Calu3 (cell line): ENCODE measurements at regions of chr1 and their contacts with region 1.

Region 1: DNA sequence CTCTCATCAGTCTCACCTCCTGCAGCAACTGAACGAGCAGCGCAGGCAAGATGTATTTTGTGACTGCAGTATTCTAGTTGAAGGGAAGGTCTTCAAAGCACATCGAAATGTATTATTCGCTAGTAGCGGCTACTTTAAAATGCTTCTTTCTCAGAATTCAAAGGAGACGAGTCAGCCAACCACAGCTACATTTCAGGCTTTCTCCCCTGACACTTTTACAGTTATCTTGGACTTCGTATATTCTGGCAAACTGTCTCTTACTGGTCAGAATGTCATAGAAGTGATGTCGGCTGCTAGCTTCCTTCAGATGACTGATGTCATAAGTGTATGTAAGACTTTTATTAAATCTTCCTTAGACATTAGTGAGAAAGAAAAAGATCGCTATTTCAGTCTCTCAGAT is 53.7 kb downstream of the ZBTB8A start:
- DNase-seq: no peak
- H3K4me3 Mint-ChIP-seq: no peak overlapping the region
- H3K27ac Mint-ChIP-seq: no peak overlapping the region
- H3K4me1 Mint-ChIP-seq: no peaks in the 10 kb centered on the region
- H3K27me3 Mint-ChIP-seq: no peaks in the 10 kb centered on the region
- CTCF ChIP-seq: no peak

Region 2: DNA sequence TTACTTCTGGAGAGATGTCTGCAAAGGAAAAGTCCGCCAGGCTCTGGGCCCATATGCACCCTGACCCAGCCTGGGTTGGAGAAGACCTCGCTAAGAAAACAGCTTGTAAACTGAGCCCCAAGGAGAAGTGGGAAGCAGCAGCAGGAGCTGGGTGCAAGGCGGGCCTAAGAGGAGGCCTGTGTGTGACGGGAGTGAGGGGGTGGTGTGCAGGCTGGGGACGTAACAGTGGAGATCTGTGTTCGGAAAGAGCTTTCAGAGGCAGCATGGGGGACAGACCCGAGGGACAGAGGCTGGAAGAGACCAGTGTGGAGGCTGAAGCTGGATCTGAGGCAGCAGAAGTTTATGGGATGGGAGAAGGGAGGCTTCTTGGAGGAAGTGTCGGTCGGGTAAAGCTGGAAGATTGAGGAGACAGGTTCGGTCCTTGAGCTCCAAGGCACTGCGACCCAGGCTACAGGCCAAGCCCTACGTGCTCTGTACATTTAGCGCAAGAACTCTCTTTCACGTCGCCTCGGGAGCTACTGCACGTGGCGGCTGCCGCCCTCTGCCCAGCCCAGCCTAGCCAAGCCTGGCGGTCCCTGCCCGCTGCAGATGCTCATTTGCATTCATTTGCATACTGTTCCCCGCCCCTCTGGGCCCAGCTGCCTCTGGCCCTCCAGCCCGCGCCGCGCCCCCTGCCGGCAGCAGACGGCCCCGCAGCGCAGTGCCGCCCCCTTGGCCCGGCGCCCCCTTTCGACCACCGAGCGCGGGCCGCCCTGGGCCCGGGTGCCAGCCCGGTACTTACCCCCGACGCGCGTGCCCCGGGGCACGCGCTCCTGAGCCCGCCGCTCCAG is 299.6 kb after region 1 on chr1:
- CTCF ChIA-PET with region 1: interaction called, 10 read pairs
- intact Hi-C with region 1: no loop called
- DNase-seq: peak; percentile 65
- H3K4me3 Mint-ChIP-seq: peak overlapping the region; percentile 74
- H3K27ac Mint-ChIP-seq: peak overlapping the region; percentile 31
- H3K4me1 Mint-ChIP-seq: peaks cover 16% of the 10 kb centered on the region
- H3K27me3 Mint-ChIP-seq: peaks cover 61% of the 10 kb centered on the region
- CTCF ChIP-seq: peak; percentile 95

Region 3: DNA sequence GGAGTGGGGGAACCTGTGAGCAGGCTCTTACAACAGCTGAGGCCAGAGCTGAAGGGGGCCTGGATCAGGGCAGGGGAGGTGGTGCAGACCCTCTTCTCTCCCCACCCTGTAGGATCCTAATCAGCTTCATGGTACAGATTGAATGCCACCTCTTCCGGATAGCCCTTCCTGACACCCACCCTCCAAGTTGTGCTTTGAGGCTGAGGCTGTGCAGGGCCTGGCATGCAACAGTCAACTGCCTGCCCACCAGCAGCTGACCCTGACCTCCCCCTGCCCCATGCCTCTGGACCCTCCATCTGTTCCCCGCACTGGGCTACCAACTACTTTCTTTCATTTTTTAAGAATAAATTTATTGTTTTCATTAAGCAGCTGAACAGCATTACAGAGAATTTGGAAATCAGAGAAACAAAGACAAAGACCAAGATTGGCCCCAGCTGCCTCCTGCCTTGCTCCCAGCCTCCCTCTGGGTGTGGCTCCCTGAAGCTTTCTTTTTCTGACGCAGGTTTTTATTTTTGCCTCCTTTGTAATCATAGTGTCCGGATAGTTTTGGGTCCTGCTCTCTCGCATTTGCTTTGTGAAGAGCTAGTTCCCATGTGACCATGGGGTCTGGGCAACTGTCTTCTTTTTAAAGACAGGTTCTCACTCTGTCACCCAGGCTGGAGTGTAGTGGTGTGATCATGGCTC is 676.1 kb after region 1 on chr1:
- CTCF ChIA-PET with region 1: no interaction called
- intact Hi-C with region 1: no loop called
- DNase-seq: no peak
- H3K4me3 Mint-ChIP-seq: no peak overlapping the region
- H3K27ac Mint-ChIP-seq: no peak overlapping the region
- H3K4me1 Mint-ChIP-seq: no peaks in the 10 kb centered on the region
- H3K27me3 Mint-ChIP-seq: no peaks in the 10 kb centered on the region
- CTCF ChIP-seq: no peak